Spleen (tissue), 13 donors: ENCODE measurements at regions of chr3 and their contacts with region 1.

Region 1: DNA sequence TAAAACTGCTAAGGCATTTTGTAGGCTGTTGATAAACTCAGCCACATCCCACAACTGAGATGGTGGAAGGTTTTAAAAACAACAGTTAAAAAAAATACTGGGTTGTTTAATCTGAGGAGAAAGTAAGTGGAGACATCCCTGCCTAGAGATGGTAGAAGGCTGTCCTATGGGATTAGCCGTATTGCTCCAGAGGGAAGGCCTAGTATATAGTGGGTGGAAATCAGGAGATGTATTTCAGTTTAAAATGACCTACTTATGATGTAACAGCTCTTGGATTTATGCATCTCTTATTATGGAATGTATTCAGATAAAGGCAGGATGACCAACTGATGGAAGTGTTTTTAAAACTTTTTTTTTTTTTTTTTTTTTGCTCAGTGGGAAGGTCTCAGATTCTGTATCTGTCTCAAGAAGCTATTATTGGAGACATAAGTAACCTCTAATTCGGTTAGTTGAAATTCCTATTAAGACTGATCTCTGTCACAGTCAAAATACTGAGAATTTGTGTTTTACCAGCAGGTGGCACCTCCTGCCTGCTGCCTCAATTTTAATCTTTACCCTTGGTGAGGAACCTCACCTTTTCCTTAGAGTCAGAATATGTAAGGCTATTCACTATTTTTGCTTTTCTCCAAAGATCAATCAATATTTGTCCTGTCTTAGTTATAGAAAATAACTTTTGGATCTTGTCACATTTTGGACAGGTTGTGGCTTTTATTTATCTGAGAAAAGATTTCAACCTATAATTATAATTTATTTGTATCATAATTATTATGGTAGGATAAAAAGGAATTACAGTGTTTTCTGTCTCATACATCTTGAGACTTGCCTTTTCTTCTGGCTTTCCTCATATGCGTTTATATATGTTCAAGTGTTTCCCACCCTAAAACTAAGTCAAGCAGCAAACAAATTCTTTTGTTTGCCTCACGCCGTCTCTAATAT is 63.0 kb downstream of the VPS8 start:
- DNase-seq: no peak
- H3K4me3 ChIP-seq: no peak overlapping the region
- H3K27ac ChIP-seq: no peak overlapping the region
- H3K4me1 ChIP-seq: no peaks in the 10 kb centered on the region
- H3K27me3 ChIP-seq: no peaks in the 10 kb centered on the region
- CTCF ChIP-seq: peak in 8 of 11 experiments; percentile 15 to 54 (median 45)
- POLR2A ChIP-seq: no peak

Region 2: DNA sequence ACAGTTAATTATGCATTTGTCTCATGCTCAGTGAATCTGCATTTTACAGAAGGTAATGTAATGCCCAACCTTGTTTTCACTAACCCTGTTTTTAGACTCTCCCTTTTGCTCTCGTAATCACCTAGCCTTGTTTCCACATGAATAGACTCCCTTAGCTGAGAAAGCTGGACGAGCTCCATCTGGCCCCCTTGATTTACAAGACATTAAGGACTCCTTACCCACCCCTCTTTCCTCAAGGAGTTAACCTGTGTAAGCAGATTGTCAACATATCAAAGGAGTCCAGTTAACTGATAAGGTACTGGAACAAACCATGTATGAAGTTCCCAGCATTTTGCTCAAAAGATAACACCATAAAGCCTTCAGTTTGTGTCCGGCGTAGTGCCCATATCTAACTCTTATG is 36.6 kb after region 1 on chr3:
- intact Hi-C with region 1: no loop called
- DNase-seq: no peak
- H3K4me3 ChIP-seq: no peak overlapping the region
- H3K27ac ChIP-seq: no peak overlapping the region
- H3K4me1 ChIP-seq: no peaks in the 10 kb centered on the region
- H3K27me3 ChIP-seq: no peaks in the 10 kb centered on the region
- CTCF ChIP-seq: no peak
- POLR2A ChIP-seq: no peak

Region 3: GRCh38 chr3:185176750-185177359 is 301.9 kb after region 1 on chr3:
- intact Hi-C with region 1: loop called (anchors 5 kb)
- DNase-seq: no peak
- H3K4me3 ChIP-seq: no peak overlapping the region
- H3K27ac ChIP-seq: no peak overlapping the region
- H3K4me1 ChIP-seq: peaks cover 6 to 22% (median 19%) of the 10 kb centered on the region in 6 donors
- H3K27me3 ChIP-seq: peaks cover 0 to 9% (median 0%) of the 10 kb centered on the region in 7 donors
- CTCF ChIP-seq: peak; percentile 30 to 72 (median 54)
- POLR2A ChIP-seq: no peak

Region 4: GRCh38 chr3:185381320-185382058 is 506.5 kb after region 1 on chr3:
- intact Hi-C with region 1: no loop called
- DNase-seq: no peak
- H3K4me3 ChIP-seq: no peak overlapping the region
- H3K27ac ChIP-seq: no peak overlapping the region
- H3K4me1 ChIP-seq: no peaks in the 10 kb centered on the region
- H3K27me3 ChIP-seq: no peaks in the 10 kb centered on the region
- CTCF ChIP-seq: no peak
- POLR2A ChIP-seq: no peak